A673 (cell line): ENCODE measurements at regions of chr1 and their contacts with region 1.

Region 1: GRCh38 chr1:205658943-205659581 is 21.2 kb downstream of the SLC45A3 start:
- DNase-seq: peak; percentile 88
- H3K4me3 ChIP-seq: no peak overlapping the region
- H3K27ac ChIP-seq: no peak overlapping the region
- H3K4me1 ChIP-seq: no peaks in the 10 kb centered on the region
- H3K27me3 ChIP-seq: no peaks in the 10 kb centered on the region
- CTCF ChIP-seq: peak; percentile 96

Region 2: GRCh38 chr1:205528887-205529825 is 129.9 kb before region 1 on chr1:
- CTCF ChIA-PET with region 1: interaction called, 49 read pairs
- POLR2A ChIA-PET with region 1: no interaction called
- intact Hi-C with region 1: loop called (anchors 1 kb)
- DNase-seq: peak; percentile 91
- H3K4me3 ChIP-seq: peak overlapping the region; percentile 32
- H3K27ac ChIP-seq: no peak overlapping the region
- H3K4me1 ChIP-seq: peaks cover 13% of the 10 kb centered on the region
- H3K27me3 ChIP-seq: no peaks in the 10 kb centered on the region
- CTCF ChIP-seq: peak; percentile 97

Region 3: DNA sequence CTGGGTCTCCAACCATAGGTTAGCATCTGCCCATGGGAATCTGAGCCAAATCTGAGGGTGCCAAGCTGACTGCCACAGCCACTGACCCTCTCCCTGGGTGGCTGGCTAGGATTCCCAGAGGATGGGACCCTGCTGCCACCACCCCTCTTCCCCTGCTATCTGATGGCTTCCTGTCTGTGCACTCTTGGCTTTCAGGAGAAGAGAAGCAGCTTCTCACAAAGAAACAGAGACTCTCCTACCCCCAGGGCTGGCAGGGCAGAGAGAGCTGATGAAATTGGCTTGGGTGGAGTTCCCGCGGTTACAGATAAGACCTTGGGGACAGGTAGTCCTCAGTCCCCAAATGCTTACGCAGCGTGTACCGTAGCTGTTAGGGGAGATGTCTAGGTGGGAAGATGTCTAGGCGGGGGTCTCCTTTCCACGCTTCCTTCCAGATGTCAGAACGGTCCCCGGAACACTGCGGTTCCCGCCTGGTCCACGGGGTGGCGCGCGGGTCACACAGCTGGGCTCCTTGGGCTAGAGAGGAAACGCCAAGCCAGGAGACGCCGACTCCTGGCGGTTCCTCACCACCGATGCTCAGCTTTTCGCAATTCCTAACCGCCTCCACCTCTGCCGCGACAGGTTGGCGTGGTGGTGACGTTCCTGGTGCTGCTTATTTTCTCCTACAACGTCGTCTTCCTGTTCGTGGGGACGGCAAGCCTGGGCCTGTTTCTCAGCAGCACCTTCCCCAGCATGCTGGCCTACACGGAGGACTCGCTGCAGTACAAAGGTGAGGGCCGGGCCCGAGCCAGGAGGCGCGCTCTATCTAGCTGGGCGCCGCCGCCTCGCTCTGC is 67.3 kb before region 1 on chr1:
- CTCF ChIA-PET with region 1: interaction called, 64 read pairs
- POLR2A ChIA-PET with region 1: interaction called, 3 read pairs
- intact Hi-C with region 1: loop called (anchors 1 kb)
- DNase-seq: peak; percentile 84
- H3K4me3 ChIP-seq: no peak overlapping the region
- H3K27ac ChIP-seq: no peak overlapping the region
- H3K4me1 ChIP-seq: no peaks in the 10 kb centered on the region
- H3K27me3 ChIP-seq: peaks cover 10% of the 10 kb centered on the region
- CTCF ChIP-seq: peak; percentile 97

Region 4: DNA sequence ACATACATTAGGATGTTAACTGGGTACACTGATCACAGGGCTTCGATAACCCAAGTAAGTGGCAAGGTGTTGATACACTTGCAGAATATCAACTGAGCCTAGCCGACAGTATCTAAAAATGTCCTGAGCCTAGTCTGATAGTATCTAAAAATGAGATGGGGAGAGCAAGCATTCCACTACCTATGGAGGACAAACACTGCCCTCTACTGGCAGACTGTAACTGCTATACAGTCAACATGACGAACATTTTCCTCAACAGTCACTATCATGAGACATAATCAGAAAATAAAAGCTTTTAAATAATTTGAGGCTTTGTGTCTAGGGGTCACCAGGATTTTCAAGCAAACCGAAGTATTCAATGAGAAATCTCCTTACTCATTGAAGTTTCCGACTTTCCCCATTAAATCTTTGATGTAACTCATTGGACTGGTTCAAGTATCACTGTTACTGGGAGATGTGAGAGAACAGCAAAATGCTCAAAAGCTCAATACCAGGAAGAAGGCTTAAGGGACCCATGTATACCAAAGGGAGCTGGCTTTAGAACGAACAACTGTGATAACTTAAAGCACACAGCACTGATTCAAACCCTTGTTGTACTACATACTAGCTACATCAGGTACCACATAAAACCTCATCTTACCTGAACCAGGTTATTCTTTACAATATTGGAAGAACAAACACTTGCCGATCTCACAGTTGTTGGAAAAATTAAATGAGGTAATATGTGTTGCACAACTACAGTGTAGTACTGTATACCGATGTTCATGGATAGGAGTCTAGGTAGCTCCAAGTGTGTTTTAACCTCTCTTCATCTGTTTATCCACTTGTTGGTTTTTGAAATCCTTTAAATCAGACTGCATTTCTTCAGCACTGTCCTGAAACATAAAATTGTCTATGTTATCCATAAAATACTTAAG is 52.3 kb after region 1 on chr1:
- CTCF ChIA-PET with region 1: interaction called, 34 read pairs
- POLR2A ChIA-PET with region 1: no interaction called
- intact Hi-C with region 1: loop called (anchors 1 kb)
- DNase-seq: peak; percentile 82
- H3K4me3 ChIP-seq: no peak overlapping the region
- H3K27ac ChIP-seq: no peak overlapping the region
- H3K4me1 ChIP-seq: no peaks in the 10 kb centered on the region
- H3K27me3 ChIP-seq: no peaks in the 10 kb centered on the region
- CTCF ChIP-seq: peak; percentile 94

Region 5: GRCh38 chr1:205896320-205896719 is 237.3 kb after region 1 on chr1:
- CTCF ChIA-PET with region 1: no interaction called
- POLR2A ChIA-PET with region 1: no interaction called
- intact Hi-C with region 1: no loop called
- DNase-seq: no peak
- H3K4me3 ChIP-seq: no peak overlapping the region
- H3K27ac ChIP-seq: no peak overlapping the region
- H3K4me1 ChIP-seq: no peaks in the 10 kb centered on the region
- H3K27me3 ChIP-seq: no peaks in the 10 kb centered on the region
- CTCF ChIP-seq: no peak

Region 6: GRCh38 chr1:205977402-205978014 is 318.4 kb after region 1 on chr1:
- CTCF ChIA-PET with region 1: interaction called, 41 read pairs
- POLR2A ChIA-PET with region 1: no interaction called
- intact Hi-C with region 1: loop called (anchors 1 kb)
- DNase-seq: peak; percentile 80
- H3K4me3 ChIP-seq: no peak overlapping the region
- H3K27ac ChIP-seq: no peak overlapping the region
- H3K4me1 ChIP-seq: no peaks in the 10 kb centered on the region
- H3K27me3 ChIP-seq: no peaks in the 10 kb centered on the region
- CTCF ChIP-seq: peak; percentile 98